Activated CD8-positive, alpha-beta T cell treated with anti-CD3 and anti-CD28 coated beads for 36 hours (primary cell): ENCODE measurements at regions of chr6 and their contacts with region 1.

Region 1: DNA sequence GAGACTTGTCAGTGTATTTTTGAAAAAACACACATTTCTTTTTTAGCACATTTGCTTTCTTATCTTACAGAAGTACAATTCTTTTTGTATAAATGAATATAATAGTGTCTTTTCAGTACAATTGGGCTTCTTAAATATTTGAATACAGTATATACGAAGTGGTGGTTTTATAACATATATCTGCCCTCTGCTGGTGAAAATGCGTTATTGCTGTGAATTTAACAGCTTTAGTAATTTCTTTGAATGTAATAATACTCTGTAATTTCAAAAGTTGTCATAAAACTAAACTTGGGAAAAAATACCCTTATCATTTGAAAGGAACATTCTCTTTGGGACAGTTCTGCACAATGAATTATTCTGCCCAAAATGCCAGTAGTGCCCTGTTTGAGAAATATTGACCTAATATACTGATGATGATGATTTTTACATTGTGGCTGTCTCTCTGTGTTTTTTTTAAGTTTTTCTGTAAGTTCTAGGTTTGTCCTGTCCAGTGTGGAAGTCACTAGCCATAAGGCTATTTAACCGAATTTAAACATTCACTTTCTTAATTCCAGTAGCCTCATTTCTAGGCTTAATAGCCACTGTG is 19.0 kb downstream of the SMAP1 start:
- DNase-seq: no peak
- ATAC-seq: peak; percentile 47
- H3K4me3 Mint-ChIP-seq: no peak overlapping the region
- H3K27ac Mint-ChIP-seq: no peak overlapping the region
- H3K4me1 Mint-ChIP-seq: peaks cover 35% of the 10 kb centered on the region
- H3K27me3 Mint-ChIP-seq: no peaks in the 10 kb centered on the region
- CTCF ChIP-seq: peak; percentile 82

Region 2: GRCh38 chr6:70520575-70520974 is 166.1 kb before region 1 on chr6:
- CTCF ChIA-PET with region 1: interaction called, 40 read pairs
- POLR2A ChIA-PET with region 1: no interaction called
- intact Hi-C with region 1: loop called (anchors 2 kb)
- DNase-seq: no peak
- ATAC-seq: no peak
- H3K4me3 Mint-ChIP-seq: no peak overlapping the region
- H3K27ac Mint-ChIP-seq: no peak overlapping the region
- H3K4me1 Mint-ChIP-seq: peaks cover 4% of the 10 kb centered on the region
- H3K27me3 Mint-ChIP-seq: no peaks in the 10 kb centered on the region
- CTCF ChIP-seq: no peak

Region 3: GRCh38 chr6:70547313-70547712 is 139.3 kb before region 1 on chr6:
- CTCF ChIA-PET with region 1: interaction called, 31 read pairs
- POLR2A ChIA-PET with region 1: no interaction called
- intact Hi-C with region 1: loop called (anchors 5 kb)
- DNase-seq: no peak
- ATAC-seq: peak; percentile 47
- H3K4me3 Mint-ChIP-seq: no peak overlapping the region
- H3K27ac Mint-ChIP-seq: no peak overlapping the region
- H3K4me1 Mint-ChIP-seq: no peaks in the 10 kb centered on the region
- H3K27me3 Mint-ChIP-seq: no peaks in the 10 kb centered on the region
- CTCF ChIP-seq: no peak

Region 4: DNA sequence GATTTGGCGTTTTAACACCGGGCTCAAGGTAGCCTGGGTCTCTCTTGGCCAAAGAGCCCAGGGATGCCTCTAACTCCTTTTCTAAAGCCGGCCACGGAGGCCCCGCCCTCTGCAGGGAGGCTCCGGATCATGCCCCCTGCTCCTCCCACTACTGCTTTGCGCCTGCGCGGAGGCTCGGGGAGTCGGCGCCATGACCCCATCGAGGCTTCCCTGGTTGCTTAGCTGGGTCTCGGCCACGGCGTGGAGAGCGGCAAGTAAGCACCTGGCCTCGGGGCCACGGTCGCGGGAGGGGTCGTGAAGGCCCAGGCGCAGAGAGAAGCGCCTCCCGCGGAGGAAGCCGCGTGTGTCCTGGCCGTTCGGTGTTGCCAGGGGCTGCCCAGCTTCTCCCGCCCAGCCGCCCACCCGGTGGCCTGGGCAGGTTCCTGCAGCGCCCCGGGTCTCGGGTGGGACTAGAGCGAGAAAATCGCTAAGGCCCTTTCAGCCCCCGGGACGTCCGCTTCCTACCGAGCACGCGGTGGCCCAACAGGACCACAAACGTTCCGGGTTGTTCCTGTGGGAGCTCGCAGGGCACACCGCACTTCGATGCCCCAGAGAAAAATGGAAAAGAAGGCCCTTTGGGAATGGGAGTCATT is 119.8 kb before region 1 on chr6 and contains the start of gene SDHAF4:
- CTCF ChIA-PET with region 1: interaction called, 13 read pairs
- POLR2A ChIA-PET with region 1: no interaction called
- intact Hi-C with region 1: no loop called
- DNase-seq: peak; percentile 95
- ATAC-seq: peak; percentile 100
- H3K4me3 Mint-ChIP-seq: peak within 1 kb of the TSS; percentile 91
- H3K27ac Mint-ChIP-seq: peak within 1 kb of the TSS; percentile 88
- H3K4me1 Mint-ChIP-seq: peaks cover 17% of the 10 kb centered on the region
- H3K27me3 Mint-ChIP-seq: no peaks in the 10 kb centered on the region
- CTCF ChIP-seq: no peak
- total RNA-seq, gene SDHAF4: 17.9 to 18.9 TPM

Region 5: GRCh38 chr6:70667711-70668498 is 18.7 kb before region 1 on chr6 and contains the start of gene SMAP1:
- CTCF ChIA-PET with region 1: interaction called, 27 read pairs
- POLR2A ChIA-PET with region 1: interaction called, 6 read pairs
- intact Hi-C with region 1: no loop called
- DNase-seq: peak; percentile 94
- ATAC-seq: peak; percentile 94
- H3K4me3 Mint-ChIP-seq: peak within 1 kb of the TSS; percentile 93
- H3K27ac Mint-ChIP-seq: peak within 1 kb of the TSS; percentile 92
- H3K4me1 Mint-ChIP-seq: peaks cover 53% of the 10 kb centered on the region
- H3K27me3 Mint-ChIP-seq: no peaks in the 10 kb centered on the region
- CTCF ChIP-seq: no peak
- total RNA-seq, gene SMAP1: 24.1 to 26.3 TPM

Region 6: DNA sequence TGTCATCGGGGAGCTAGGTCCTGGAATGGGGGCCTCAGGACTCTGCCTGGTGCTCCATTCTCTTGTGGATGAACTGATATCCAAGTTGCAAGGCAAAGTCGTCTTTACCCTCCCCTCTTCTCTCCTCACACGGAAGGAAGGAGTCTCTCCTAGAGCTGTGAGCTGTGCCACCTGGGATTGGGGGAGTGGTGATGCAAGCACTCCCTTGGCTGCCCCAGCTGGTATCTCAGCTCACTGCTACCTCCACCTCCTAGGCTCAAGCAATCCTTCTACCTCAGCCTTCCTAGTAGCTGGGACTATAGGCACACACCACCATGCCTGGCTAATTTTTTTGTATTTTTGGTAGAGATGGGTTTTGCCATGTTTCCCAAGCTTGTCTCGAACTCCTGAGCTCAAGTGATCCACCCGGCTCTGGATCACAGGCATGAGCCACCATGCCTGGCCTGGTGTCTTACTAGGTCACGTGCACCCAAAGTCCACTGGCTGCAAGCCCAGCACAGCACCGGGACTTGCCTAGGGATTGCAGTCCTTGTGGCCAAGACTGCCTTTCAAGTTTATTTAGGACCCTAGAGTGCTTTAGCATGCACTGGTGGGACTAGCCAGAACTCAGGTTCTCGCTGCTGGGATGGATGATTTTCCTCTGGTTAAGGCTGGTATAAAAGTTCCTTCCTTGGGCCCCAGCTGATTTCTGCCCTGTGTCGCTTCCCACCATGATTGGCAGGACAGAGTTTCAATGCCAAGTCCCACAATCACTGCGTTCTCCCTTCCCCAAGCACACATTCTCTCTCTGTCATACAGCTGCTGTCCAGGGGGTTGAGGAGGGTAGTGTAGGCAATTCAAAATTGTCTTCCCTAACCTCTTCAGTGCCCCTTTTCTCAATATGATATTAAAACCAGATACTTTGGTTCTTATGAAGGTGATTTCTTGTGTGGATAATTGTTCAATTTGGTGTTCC is 14.6 kb after region 1 on chr6:
- CTCF ChIA-PET with region 1: interaction called, 14 read pairs
- POLR2A ChIA-PET with region 1: interaction called, 3 read pairs
- intact Hi-C with region 1: no loop called
- DNase-seq: no peak
- ATAC-seq: no peak
- H3K4me3 Mint-ChIP-seq: no peak overlapping the region
- H3K27ac Mint-ChIP-seq: no peak overlapping the region
- H3K4me1 Mint-ChIP-seq: peaks cover 24% of the 10 kb centered on the region
- H3K27me3 Mint-ChIP-seq: no peaks in the 10 kb centered on the region
- CTCF ChIP-seq: no peak